CD14-positive monocyte (primary cell): ENCODE measurements at regions of chr1 and their contacts with region 1.

Region 1: GRCh38 chr1:212665241-212666115 is 34.2 kb downstream of the BATF3 start:
- DNase-seq: peak; percentile 75 to 83 (median 79)
- H3K4me3 ChIP-seq: peak overlapping the region; percentile 45 to 76 (median 57)
- H3K4me3 Mint-ChIP-seq: peak overlapping the region; percentile 81 to 93
- H3K27ac ChIP-seq: peak overlapping the region; percentile 34 to 80
- H3K27ac Mint-ChIP-seq: peak overlapping the region; percentile 28 to 93 (median 92)
- H3K4me1 ChIP-seq: peaks cover 40 to 50% of the 10 kb centered on the region in 2 donors
- H3K4me1 Mint-ChIP-seq: peaks cover 45% of the 10 kb centered on the region
- H3K27me3 ChIP-seq: no peaks in the 10 kb centered on the region
- H3K27me3 Mint-ChIP-seq: peaks cover 2 to 8% (median 6%) of the 10 kb centered on the region in 3 donors
- CTCF ChIP-seq: peak; percentile 99

Region 2: DNA sequence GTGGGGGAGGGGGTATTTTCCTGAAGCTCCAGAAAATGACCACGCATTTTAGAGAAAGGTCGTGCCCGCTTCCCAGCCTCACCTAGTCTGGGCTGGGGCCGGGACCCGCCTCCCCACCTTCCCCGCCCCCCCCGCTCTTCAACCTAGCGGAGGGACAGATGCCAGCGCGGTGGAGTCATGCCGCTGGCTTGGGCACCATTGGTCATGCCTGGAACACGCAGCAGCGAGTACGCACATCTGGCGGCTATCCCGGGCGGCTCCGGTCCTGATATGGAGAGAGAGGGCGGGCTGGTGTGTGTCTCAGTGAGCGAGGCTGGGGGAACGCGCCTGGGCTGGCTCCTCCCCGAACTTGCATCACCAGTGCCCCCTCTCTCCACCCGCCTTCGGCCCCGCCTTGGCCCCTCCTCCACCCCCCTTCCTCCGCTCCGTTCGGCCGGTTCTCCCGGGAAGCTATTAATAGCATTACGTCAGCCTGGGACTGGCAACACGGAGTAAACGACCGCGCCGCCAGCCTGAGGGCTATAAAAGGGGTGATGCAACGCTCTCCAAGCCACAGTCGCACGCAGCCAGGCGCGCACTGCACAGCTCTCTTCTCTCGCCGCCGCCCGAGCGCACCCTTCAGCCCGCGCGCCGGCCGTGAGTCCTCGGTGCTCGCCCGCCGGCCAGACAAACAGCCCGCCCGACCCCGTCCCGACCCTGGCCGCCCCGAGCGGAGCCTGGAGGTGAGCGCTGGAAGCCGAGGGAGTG is 57.1 kb before region 1 on chr1 and contains the start of gene ATF3:
- intact Hi-C with region 1: loop called in 1 of 2 experiments (anchors 10 kb)
- DNase-seq: peak; percentile 98 to 100 (median 100)
- H3K4me3 ChIP-seq: peak within 1 kb of the TSS; percentile 70 to 94 (median 83)
- H3K4me3 Mint-ChIP-seq: peak within 1 kb of the TSS; percentile 95 to 97
- H3K27ac ChIP-seq: peak within 1 kb of the TSS; percentile 84 to 91
- H3K27ac Mint-ChIP-seq: peak within 1 kb of the TSS; percentile 90 to 98 (median 95)
- H3K4me1 ChIP-seq: peaks cover 29 to 38% of the 10 kb centered on the region in 2 donors
- H3K4me1 Mint-ChIP-seq: peaks cover 46% of the 10 kb centered on the region
- H3K27me3 ChIP-seq: peaks cover 50 to 78% of the 10 kb centered on the region in 2 donors
- H3K27me3 Mint-ChIP-seq: peaks cover 69 to 84% (median 84%) of the 10 kb centered on the region in 3 donors
- CTCF ChIP-seq: no peak
- polyA plus RNA-seq, gene ATF3: 10.4 to 227 (median 13.3) TPM

Region 3: GRCh38 chr1:212630158-212630900 is 35.1 kb before region 1 on chr1:
- intact Hi-C with region 1: loop called in 1 of 2 experiments (anchors 5 kb)
- DNase-seq: peak; percentile 90 to 95 (median 92)
- H3K4me3 ChIP-seq: no peak overlapping the region
- H3K4me3 Mint-ChIP-seq: no peak overlapping the region
- H3K27ac ChIP-seq: no peak overlapping the region
- H3K27ac Mint-ChIP-seq: no peak overlapping the region
- H3K4me1 ChIP-seq: peaks cover 18 to 23% of the 10 kb centered on the region in 2 donors
- H3K4me1 Mint-ChIP-seq: peaks cover 14% of the 10 kb centered on the region
- H3K27me3 ChIP-seq: no peaks in the 10 kb centered on the region
- H3K27me3 Mint-ChIP-seq: peaks cover 2 to 12% (median 3%) of the 10 kb centered on the region in 3 donors
- CTCF ChIP-seq: peak; percentile 95

Region 4: GRCh38 chr1:212700892-212701819 is 35.7 kb after region 1 on chr1:
- intact Hi-C with region 1: loop called in 1 of 2 experiments (anchors 5 kb)
- DNase-seq: peak in 1 of 3 donors; percentile 36
- H3K4me3 ChIP-seq: peak overlapping the region in 2 of 3 experiments; percentile 44 to 74
- H3K4me3 Mint-ChIP-seq: peak overlapping the region; percentile 90 to 92
- H3K27ac ChIP-seq: no peak overlapping the region
- H3K27ac Mint-ChIP-seq: peak overlapping the region in 4 of 7 donors; percentile 43 to 81 (median 71)
- H3K4me1 ChIP-seq: peaks cover 29 to 31% of the 10 kb centered on the region in 2 donors
- H3K4me1 Mint-ChIP-seq: peaks cover 36% of the 10 kb centered on the region
- H3K27me3 ChIP-seq: peaks cover 20 to 51% of the 10 kb centered on the region in 2 donors
- H3K27me3 Mint-ChIP-seq: peaks cover 33 to 64% (median 50%) of the 10 kb centered on the region in 3 donors
- CTCF ChIP-seq: no peak

Region 5: DNA sequence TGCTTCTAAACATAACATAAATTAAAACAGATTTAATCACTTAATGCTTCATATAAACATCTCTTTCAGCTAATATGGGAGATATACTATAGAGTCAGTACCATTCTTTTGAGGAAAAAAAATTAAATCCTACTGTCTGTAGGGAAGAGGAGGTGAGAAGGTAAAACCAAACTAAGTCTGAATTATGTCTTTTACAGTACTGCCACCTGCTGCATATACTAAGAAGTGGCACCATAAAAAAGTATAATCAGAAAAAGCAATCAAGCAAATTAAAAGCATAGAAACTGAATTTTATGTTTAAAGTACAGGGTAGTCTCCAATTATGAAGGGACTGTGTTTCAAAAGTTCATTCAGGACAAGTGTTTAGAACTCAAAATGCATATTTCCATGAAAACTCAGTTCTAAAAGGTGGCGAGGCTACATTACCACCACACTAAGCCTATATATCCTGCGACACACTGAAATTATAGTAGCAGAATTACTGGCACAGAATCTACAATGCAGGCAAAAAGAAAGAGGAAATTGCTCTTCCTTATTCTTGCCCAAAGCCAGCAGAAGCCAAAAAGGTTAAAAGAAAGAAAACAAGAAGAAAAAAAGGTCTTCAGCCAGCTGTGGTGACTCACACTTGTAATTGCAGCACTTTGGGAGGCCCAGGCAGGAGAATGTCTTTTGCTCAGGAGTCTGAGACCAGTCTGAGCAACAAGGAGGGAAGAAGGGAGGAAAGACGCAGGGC is 117.1 kb after region 1 on chr1:
- intact Hi-C with region 1: loop called in 1 of 2 experiments (anchors 5 kb)
- DNase-seq: peak; percentile 40 to 86 (median 64)
- H3K4me3 ChIP-seq: no peak overlapping the region
- H3K4me3 Mint-ChIP-seq: no peak overlapping the region
- H3K27ac ChIP-seq: peak overlapping the region; percentile 33 to 59
- H3K27ac Mint-ChIP-seq: peak overlapping the region; percentile 68 to 92 (median 87)
- H3K4me1 ChIP-seq: peaks cover 8 to 17% of the 10 kb centered on the region in 2 donors
- H3K4me1 Mint-ChIP-seq: peaks cover 13% of the 10 kb centered on the region
- H3K27me3 ChIP-seq: no peaks in the 10 kb centered on the region
- H3K27me3 Mint-ChIP-seq: peaks cover 0 to 2% (median 0%) of the 10 kb centered on the region in 3 donors
- CTCF ChIP-seq: peak; percentile 91

Region 6: GRCh38 chr1:212791676-212792395 is 126.4 kb after region 1 on chr1 and contains the starts of genes NSL1 and TATDN3:
- intact Hi-C with region 1: loop called in 1 of 2 experiments (anchors 5 kb)
- DNase-seq: peak; percentile 93 to 95 (median 95)
- H3K4me3 ChIP-seq: peak within 1 kb of the TSS; percentile 84 to 96 (median 92)
- H3K4me3 Mint-ChIP-seq: peak within 1 kb of the TSS; percentile 97 to 100
- H3K27ac ChIP-seq: peak within 1 kb of the TSS; percentile 96 to 98
- H3K27ac Mint-ChIP-seq: peak within 1 kb of the TSS; percentile 97 to 100 (median 98)
- H3K4me1 ChIP-seq: peaks cover 53% of the 10 kb centered on the region in 2 donors
- H3K4me1 Mint-ChIP-seq: peaks cover 38% of the 10 kb centered on the region
- H3K27me3 ChIP-seq: no peaks in the 10 kb centered on the region
- H3K27me3 Mint-ChIP-seq: no peaks in the 10 kb centered on the region
- CTCF ChIP-seq: no peak
- polyA plus RNA-seq, gene NSL1: 16.8 to 80.3 (median 62.3) TPM
- polyA plus RNA-seq, gene TATDN3: 12.1 to 34.3 (median 31.4) TPM

Region 7: DNA sequence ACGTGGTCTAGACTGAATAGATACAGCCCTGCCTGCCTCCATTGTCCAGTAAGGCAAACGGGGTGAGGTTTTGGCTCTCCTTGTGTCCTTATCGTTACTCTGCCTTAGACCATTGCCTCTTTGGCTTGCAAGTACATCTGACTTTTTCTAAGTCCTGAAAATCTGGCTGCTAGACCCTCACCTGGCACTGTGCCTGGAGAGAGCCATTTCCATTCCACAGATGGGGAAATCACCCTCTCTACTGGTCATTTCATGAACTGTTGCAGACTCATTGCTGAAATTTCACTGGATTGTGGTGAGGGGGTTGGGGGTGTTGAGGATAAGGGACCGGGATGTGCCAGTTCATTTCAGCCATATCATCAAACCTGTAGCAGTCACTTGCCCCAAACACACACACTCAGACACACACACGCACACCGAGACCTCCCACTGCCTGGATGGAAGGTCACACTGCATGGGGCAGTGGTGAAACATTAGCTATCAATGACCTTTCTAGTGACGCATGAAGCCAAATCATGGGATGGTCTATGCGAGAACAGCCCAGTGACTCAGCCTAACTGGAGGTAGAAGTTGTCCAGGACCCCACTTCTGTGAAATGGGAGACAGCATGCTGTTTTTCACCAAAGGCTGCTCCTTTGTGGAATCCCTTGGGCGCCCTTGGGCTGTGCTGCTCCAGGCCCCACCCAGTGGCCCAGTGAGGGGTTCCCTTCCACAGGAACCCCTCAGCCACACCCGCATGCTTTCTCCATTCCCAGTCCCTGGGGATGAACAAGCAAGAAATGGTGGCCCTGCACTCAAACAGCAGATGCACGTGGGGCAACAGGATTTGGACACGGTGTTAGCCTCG is 250.0 kb after region 1 on chr1:
- intact Hi-C with region 1: no loop called
- DNase-seq: no peak
- H3K4me3 ChIP-seq: no peak overlapping the region
- H3K4me3 Mint-ChIP-seq: no peak overlapping the region
- H3K27ac ChIP-seq: no peak overlapping the region
- H3K27ac Mint-ChIP-seq: no peak overlapping the region
- H3K4me1 ChIP-seq: peaks cover 8% of the 10 kb centered on the region in 2 donors
- H3K4me1 Mint-ChIP-seq: peaks cover 11% of the 10 kb centered on the region
- H3K27me3 ChIP-seq: no peaks in the 10 kb centered on the region
- H3K27me3 Mint-ChIP-seq: peaks cover 9 to 12% (median 11%) of the 10 kb centered on the region in 3 donors
- CTCF ChIP-seq: no peak

Region 8: DNA sequence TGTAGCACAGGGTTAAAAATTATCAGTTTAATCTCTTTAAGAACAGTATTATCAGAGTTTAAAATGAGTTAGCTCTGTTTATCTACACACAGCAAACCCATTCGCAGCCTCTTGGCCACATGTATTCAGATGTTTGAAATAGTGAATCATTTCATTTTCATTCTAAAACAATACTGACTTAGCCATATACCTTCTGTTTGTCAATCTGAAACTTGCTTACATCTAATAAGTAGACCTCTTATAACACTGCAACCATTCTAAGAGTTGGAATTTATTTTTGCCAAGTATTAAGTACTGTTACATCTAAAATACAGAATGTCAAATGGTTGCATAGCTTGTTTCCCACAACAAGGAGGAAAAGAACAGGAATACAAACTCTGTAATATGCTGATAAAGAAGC is 324.8 kb after region 1 on chr1:
- intact Hi-C with region 1: loop called in 1 of 2 experiments (anchors 1 kb)
- DNase-seq: no peak
- H3K4me3 ChIP-seq: no peak overlapping the region
- H3K4me3 Mint-ChIP-seq: no peak overlapping the region
- H3K27ac ChIP-seq: no peak overlapping the region
- H3K27ac Mint-ChIP-seq: no peak overlapping the region
- H3K4me1 ChIP-seq: no peaks in the 10 kb centered on the region
- H3K4me1 Mint-ChIP-seq: no peaks in the 10 kb centered on the region
- H3K27me3 ChIP-seq: no peaks in the 10 kb centered on the region
- H3K27me3 Mint-ChIP-seq: no peaks in the 10 kb centered on the region
- CTCF ChIP-seq: no peak